CD4-positive, alpha-beta T cell (primary cell): ENCODE measurements at regions of chr13 and their contacts with region 1.

Region 1: GRCh38 chr13:51645154-51645650 is 60.9 kb downstream of the WDFY2 start:
- DNase-seq: peak in 6 of 14 experiments; percentile 17 to 87 (median 68)
- ATAC-seq: peak; percentile 87
- H3K4me3 ChIP-seq: peak overlapping the region; percentile 12
- H3K4me3 Mint-ChIP-seq: peak overlapping the region; percentile 82
- H3K27ac ChIP-seq: peak overlapping the region; percentile 54 to 95
- H3K27ac Mint-ChIP-seq: peak overlapping the region; percentile 95
- H3K4me1 ChIP-seq: peaks cover 44% of the 10 kb centered on the region
- H3K4me1 Mint-ChIP-seq: peaks cover 55% of the 10 kb centered on the region
- H3K27me3 ChIP-seq: no peaks in the 10 kb centered on the region
- H3K27me3 Mint-ChIP-seq: no peaks in the 10 kb centered on the region
- CTCF ChIP-seq: no peak

Region 2: DNA sequence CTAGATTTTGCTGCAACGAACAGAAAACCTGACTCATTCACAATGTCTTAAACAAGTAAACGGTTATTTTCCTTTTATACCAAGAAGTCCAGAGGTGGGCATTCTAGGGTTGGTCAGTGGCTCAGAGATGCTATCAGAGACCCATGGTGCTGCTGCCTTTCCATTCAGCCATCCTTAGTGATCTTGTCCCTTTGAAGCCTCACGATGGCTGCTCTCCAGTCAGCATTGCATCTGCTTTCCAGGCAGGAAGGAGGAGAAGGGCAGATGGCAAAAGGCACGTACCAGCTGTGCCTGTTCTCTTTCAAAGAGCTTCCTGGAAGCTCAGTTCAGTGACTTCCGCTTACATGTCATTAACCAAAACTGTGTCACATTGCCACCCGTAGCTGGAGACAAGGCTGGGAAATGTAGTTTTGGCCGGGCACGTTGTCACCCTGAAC is 30.8 kb before region 1 on chr13:
- CTCF ChIA-PET with region 1: no interaction called
- POLR2A ChIA-PET with region 1: interaction called, 30 read pairs
- intact Hi-C with region 1: loop called in 1 of 2 experiments (anchors 5 kb)
- DNase-seq: peak; percentile 7 to 75 (median 26)
- ATAC-seq: peak; percentile 96
- H3K4me3 ChIP-seq: peak overlapping the region; percentile 42
- H3K4me3 Mint-ChIP-seq: peak overlapping the region; percentile 89
- H3K27ac ChIP-seq: peak overlapping the region; percentile 34 to 78
- H3K27ac Mint-ChIP-seq: peak overlapping the region; percentile 89
- H3K4me1 ChIP-seq: peaks cover 5% of the 10 kb centered on the region
- H3K4me1 Mint-ChIP-seq: peaks cover 23% of the 10 kb centered on the region
- H3K27me3 ChIP-seq: no peaks in the 10 kb centered on the region
- H3K27me3 Mint-ChIP-seq: no peaks in the 10 kb centered on the region
- CTCF ChIP-seq: no peak

Region 3: GRCh38 chr13:51625555-51626345 is 19.5 kb before region 1 on chr13:
- CTCF ChIA-PET with region 1: interaction called, 4 read pairs
- POLR2A ChIA-PET with region 1: no interaction called
- intact Hi-C with region 1: loop called in 1 of 2 experiments (anchors 2 kb)
- DNase-seq: no peak
- ATAC-seq: no peak
- H3K4me3 ChIP-seq: no peak overlapping the region
- H3K4me3 Mint-ChIP-seq: peak overlapping the region; percentile 42
- H3K27ac ChIP-seq: no peak overlapping the region
- H3K27ac Mint-ChIP-seq: no peak overlapping the region
- H3K4me1 ChIP-seq: peaks cover 6% of the 10 kb centered on the region
- H3K4me1 Mint-ChIP-seq: peaks cover 68% of the 10 kb centered on the region
- H3K27me3 ChIP-seq: no peaks in the 10 kb centered on the region
- H3K27me3 Mint-ChIP-seq: no peaks in the 10 kb centered on the region
- CTCF ChIP-seq: no peak

Region 4: DNA sequence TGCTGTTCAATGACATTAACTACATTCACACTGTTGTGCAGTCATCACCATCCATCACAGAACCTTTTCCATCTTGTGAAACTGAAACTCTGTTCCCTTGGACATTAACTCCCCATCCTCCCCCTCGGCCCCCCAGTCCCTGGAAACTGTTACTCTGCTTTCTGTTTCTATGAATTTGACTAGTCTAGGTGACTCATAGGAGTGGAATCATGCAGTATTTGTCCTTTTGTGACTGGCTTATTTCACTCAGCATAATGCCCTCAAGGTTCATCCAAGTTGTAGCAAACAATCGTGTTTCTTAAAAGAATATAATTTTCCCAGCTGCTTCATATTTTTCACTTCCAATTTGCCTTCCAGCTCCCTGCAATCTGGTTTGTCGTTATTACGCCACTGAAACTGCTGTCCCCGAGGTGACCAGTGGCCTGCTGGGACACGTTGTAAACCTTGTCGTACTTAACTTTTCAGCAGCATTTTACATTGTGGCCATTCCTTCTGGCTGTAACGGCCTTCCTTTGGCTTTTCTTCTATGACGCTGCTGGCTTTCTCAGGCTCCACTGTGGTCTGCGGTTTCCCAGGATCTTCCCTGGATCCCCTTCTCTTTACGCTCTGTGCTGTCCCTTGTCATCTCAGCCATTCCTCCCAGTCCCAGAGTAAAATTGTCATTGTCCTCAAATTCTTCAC is 84.8 kb after region 1 on chr13:
- CTCF ChIA-PET with region 1: no interaction called
- POLR2A ChIA-PET with region 1: no interaction called
- intact Hi-C with region 1: loop called in 1 of 2 experiments (anchors 10 kb)
- DNase-seq: no peak
- ATAC-seq: no peak
- H3K4me3 ChIP-seq: no peak overlapping the region
- H3K4me3 Mint-ChIP-seq: no peak overlapping the region
- H3K27ac ChIP-seq: no peak overlapping the region
- H3K27ac Mint-ChIP-seq: no peak overlapping the region
- H3K4me1 ChIP-seq: peaks cover 11% of the 10 kb centered on the region
- H3K4me1 Mint-ChIP-seq: peaks cover 4% of the 10 kb centered on the region
- H3K27me3 ChIP-seq: no peaks in the 10 kb centered on the region
- H3K27me3 Mint-ChIP-seq: no peaks in the 10 kb centered on the region
- CTCF ChIP-seq: no peak